CD8-positive, alpha-beta T cell (primary cell): ENCODE measurements at regions of chr7 and their contacts with region 1.

Region 1: DNA sequence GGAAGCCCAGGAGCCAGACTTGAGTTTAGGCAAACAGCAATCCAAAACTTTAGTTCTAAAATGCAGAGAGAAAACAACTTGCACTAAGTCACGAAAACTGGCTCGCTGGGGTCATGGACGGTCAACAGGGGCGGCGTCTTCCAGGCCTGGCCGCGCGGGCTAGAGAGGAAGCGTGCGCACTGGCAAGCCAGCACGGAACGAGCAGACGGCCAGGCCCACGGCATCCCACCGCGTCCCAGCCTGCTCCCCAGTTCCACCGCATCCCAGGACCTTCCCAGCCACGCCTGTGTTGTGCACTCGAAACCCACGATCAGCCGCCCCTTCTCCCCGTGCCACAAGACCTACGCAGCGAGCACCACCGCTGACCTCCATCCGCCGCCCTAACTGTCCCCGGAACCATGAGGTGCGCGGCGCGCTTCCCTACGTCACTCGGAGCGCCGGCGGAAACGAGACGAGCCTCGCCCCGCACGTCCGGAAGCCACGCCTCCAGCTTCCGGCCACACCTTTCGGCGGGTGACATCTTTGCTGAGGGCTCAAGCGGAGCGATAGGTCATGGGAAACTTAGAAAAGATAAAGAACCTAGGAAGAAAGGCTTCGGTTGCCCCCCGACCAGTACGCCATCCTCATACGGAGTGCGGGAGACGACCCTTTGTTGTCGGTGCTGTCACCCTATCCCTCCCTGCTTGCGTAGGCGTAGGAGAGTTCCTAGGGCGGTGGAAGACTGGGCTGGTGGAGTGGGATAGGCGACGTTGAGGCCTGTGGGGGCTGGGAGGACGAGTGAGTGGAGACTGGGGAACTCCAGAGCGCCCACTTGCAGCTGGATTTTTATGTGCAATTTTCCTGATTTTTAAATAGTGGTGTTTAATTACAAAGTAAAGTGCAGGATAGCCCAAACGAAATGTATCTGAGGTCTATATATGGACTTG is at the start of gene TBRG4:
- DNase-seq: peak; percentile 84 to 98 (median 94)
- ATAC-seq: peak; percentile 83
- H3K4me3 ChIP-seq: peak within 1 kb of the TSS; percentile 67 to 96
- H3K4me3 Mint-ChIP-seq: peak within 1 kb of the TSS; percentile 90
- H3K27ac ChIP-seq: peak within 1 kb of the TSS; percentile 94 to 99
- H3K27ac Mint-ChIP-seq: peak within 1 kb of the TSS; percentile 97
- H3K4me1 ChIP-seq: peaks cover 48% of the 10 kb centered on the region
- H3K4me1 Mint-ChIP-seq: peaks cover 48% of the 10 kb centered on the region
- H3K27me3 ChIP-seq: no peaks in the 10 kb centered on the region
- H3K27me3 Mint-ChIP-seq: no peaks in the 10 kb centered on the region
- CTCF ChIP-seq: no peak
- total RNA-seq, gene TBRG4: 75.3 to 79.7 TPM

Region 2: DNA sequence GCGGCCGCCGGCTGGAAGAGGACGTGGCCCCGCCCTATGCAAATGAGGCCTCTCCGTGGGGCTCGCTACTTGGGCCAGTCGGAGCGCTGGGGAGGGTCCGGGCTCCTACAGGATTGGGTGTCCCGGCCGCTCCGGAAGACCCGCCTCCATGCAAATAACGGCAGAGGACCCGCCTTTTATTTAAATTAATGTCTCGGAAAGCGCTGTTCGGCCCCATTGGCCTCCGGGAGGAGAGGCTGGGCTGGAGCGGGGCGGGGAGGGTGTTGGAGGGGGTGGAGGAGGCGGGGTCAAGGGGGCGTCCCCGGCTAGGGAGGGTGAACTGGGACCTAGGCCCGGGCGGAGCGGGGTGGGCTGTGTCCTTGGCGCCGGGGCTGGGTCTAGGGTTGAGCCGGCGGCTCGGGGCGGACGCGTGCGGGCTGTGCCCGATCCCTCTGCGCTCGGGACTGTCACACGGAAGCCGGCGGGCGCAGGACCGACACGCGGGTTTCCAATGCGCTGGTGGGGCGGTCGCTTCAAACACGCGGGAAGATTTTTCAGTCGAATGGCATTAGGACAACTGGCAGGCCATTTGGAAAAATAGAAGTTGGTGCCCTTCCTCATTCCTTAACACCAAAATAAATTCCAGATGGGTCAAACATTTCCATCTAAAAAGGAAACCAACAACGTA is 1028.9 kb before region 1 on chr7:
- CTCF ChIA-PET with region 1: no interaction called
- POLR2A ChIA-PET with region 1: no interaction called
- intact Hi-C with region 1: loop called (anchors 5 kb)
- DNase-seq: peak; percentile 94 to 100 (median 97)
- ATAC-seq: peak; percentile 93
- H3K4me3 ChIP-seq: peak overlapping the region; percentile 51 to 63
- H3K4me3 Mint-ChIP-seq: peak overlapping the region; percentile 88
- H3K27ac ChIP-seq: peak overlapping the region; percentile 54 to 78
- H3K27ac Mint-ChIP-seq: peak overlapping the region; percentile 82
- H3K4me1 ChIP-seq: peaks cover 26% of the 10 kb centered on the region
- H3K4me1 Mint-ChIP-seq: peaks cover 33% of the 10 kb centered on the region
- H3K27me3 ChIP-seq: no peaks in the 10 kb centered on the region
- H3K27me3 Mint-ChIP-seq: no peaks in the 10 kb centered on the region
- CTCF ChIP-seq: no peak

Region 3: GRCh38 chr7:44606450-44607254 is 504.9 kb before region 1 on chr7 and contains the start of gene OGDH:
- CTCF ChIA-PET with region 1: no interaction called
- POLR2A ChIA-PET with region 1: interaction called, 3 read pairs
- intact Hi-C with region 1: loop called in 1 of 2 experiments (anchors 1 kb)
- DNase-seq: peak; percentile 98 to 100 (median 99)
- ATAC-seq: peak; percentile 92
- H3K4me3 ChIP-seq: peak within 1 kb of the TSS; percentile 87 to 90
- H3K4me3 Mint-ChIP-seq: peak within 1 kb of the TSS; percentile 99
- H3K27ac ChIP-seq: peak within 1 kb of the TSS; percentile 96 to 98
- H3K27ac Mint-ChIP-seq: peak within 1 kb of the TSS; percentile 100
- H3K4me1 ChIP-seq: peaks cover 30% of the 10 kb centered on the region
- H3K4me1 Mint-ChIP-seq: peaks cover 34% of the 10 kb centered on the region
- H3K27me3 ChIP-seq: no peaks in the 10 kb centered on the region
- H3K27me3 Mint-ChIP-seq: no peaks in the 10 kb centered on the region
- CTCF ChIP-seq: no peak
- total RNA-seq, gene OGDH: 36.8 to 39.6 TPM

Region 4: DNA sequence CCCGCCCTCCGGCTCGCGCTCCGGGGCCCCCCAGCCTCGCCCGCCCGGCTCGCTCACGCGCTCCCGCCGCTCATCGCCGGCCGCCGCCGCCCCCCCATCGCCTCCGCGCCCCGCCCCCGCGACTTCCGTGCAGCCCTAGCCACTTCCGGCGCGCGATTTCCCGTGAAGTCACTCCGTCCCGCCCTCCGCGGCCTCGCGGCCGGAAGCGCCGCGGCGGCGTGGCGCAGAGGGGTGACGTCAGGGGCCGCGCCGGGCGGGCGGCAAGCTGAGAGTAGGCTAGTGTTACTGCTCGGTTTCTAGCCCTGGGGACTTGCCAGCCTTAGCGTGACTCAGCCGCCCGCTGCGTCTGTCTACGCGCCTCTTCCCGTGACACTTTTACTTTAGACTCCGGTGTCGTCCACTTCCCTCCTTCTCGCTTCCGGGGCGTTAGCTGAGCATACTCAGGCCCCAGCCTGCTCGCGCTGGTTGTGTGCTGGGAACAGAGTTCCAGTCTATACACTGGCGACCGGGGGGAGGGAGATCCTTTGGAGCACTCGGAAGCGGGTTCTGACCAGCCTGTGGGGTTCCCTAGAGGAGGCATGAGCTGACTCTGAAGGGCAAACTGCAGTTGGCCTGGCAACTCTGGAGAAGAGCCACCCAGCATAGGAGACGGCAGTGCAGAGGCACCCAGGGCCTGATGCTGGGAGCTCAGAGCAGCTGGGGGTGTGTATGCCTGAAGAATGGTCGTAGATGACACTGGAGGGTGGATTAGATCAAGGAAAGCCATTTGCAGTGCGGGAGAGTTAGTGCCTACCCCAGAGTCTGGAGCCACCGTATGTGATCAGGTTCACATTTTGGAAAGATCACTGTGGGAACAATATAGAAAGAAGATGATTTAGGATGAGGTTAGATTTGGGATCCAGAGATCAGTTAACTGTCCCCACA is 225.9 kb before region 1 on chr7 and contains the start of gene PURB:
- CTCF ChIA-PET with region 1: no interaction called
- POLR2A ChIA-PET with region 1: interaction called, 23 read pairs
- intact Hi-C with region 1: loop called in 1 of 2 experiments (anchors 5 kb)
- DNase-seq: peak; percentile 94 to 99 (median 97)
- ATAC-seq: peak; percentile 86
- H3K4me3 ChIP-seq: peak within 1 kb of the TSS; percentile 64 to 67
- H3K4me3 Mint-ChIP-seq: peak within 1 kb of the TSS; percentile 92
- H3K27ac ChIP-seq: peak within 1 kb of the TSS; percentile 98 to 100
- H3K27ac Mint-ChIP-seq: peak within 1 kb of the TSS; percentile 99
- H3K4me1 ChIP-seq: peaks cover 36% of the 10 kb centered on the region
- H3K4me1 Mint-ChIP-seq: peaks cover 45% of the 10 kb centered on the region
- H3K27me3 ChIP-seq: no peaks in the 10 kb centered on the region
- H3K27me3 Mint-ChIP-seq: no peaks in the 10 kb centered on the region
- CTCF ChIP-seq: no peak
- total RNA-seq, gene PURB: 16.3 to 16.5 TPM

Region 5: DNA sequence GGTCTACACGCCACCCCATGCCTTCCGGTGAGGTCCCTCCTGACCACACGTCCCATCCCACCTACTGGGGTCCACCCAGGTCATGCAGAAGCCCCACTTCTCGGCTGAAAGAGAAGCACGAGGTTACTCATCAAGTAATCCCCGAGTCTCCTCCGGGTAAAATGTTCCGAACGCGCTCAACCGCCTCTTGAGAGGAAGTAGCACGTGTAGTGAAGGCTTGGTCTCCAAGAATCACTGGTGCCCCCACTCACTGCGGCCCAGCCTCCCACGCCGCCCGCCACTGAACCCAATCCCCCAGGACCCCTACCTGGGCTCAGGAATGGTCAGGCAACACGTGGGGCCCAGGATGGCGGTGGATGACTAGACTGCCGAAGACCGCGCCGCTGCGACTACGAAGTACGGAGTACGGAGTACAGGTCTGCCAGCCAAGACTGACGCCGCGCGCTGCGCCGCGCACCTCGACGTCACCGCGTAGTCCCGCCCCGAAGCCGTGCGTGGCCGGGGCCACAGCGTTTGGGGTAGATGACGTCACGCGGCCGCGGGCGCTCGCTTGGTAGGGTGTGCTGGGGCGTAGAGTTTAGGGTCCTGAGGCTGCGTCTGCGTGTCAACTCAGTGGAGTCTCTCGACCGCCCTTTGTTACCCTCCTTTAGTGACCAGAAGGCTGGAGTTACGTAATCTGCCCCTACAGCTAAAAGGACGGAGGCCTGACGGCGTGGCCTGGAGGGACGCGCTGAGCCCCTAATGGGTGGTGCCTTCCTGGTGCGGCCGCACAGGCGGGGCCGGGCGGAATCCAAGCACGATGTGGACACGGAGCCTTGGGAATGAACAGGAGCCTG is 125.1 kb before region 1 on chr7:
- CTCF ChIA-PET with region 1: no interaction called
- POLR2A ChIA-PET with region 1: no interaction called
- intact Hi-C with region 1: loop called in 1 of 2 experiments (anchors 2 kb)
- DNase-seq: peak; percentile 86 to 98 (median 96)
- ATAC-seq: peak; percentile 93
- H3K4me3 ChIP-seq: peak overlapping the region; percentile 84 to 92
- H3K4me3 Mint-ChIP-seq: peak overlapping the region; percentile 96
- H3K27ac ChIP-seq: peak overlapping the region; percentile 93 to 99
- H3K27ac Mint-ChIP-seq: peak overlapping the region; percentile 98
- H3K4me1 ChIP-seq: peaks cover 37% of the 10 kb centered on the region
- H3K4me1 Mint-ChIP-seq: peaks cover 52% of the 10 kb centered on the region
- H3K27me3 ChIP-seq: no peaks in the 10 kb centered on the region
- H3K27me3 Mint-ChIP-seq: no peaks in the 10 kb centered on the region
- CTCF ChIP-seq: no peak

Region 6: GRCh38 chr7:45033261-45033930 is 78.2 kb before region 1 on chr7:
- CTCF ChIA-PET with region 1: no interaction called
- POLR2A ChIA-PET with region 1: interaction called, 10 read pairs
- intact Hi-C with region 1: no loop called
- DNase-seq: peak in 3 of 9 experiments; percentile 20 to 53 (median 34)
- ATAC-seq: peak; percentile 34
- H3K4me3 ChIP-seq: peak overlapping the region in 1 of 2 experiments; percentile 18
- H3K4me3 Mint-ChIP-seq: peak overlapping the region; percentile 75
- H3K27ac ChIP-seq: peak overlapping the region; percentile 11 to 51
- H3K27ac Mint-ChIP-seq: peak overlapping the region; percentile 91
- H3K4me1 ChIP-seq: peaks cover 77% of the 10 kb centered on the region
- H3K4me1 Mint-ChIP-seq: peaks cover 80% of the 10 kb centered on the region
- H3K27me3 ChIP-seq: no peaks in the 10 kb centered on the region
- H3K27me3 Mint-ChIP-seq: no peaks in the 10 kb centered on the region
- CTCF ChIP-seq: no peak

Region 7: DNA sequence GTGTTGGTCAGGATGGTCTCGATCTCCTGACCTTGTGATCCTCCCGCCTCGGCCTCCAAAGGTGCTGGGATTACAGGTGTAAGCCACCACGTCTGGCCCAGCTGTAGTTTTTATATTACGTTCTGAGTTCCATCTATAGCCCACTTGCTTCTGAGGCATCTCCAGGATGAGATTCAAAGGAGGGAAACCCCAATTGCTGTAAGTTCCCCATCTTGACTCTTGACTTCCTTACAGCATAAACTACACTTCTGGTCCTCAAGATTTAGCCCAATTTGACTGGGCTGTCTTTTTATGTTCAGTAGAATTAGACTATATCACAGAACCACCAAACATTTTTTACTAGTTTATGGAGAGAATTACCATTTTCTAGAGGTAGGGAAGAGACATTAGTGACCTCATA is 67.2 kb before region 1 on chr7:
- CTCF ChIA-PET with region 1: no interaction called
- POLR2A ChIA-PET with region 1: no interaction called
- intact Hi-C with region 1: no loop called
- DNase-seq: no peak
- ATAC-seq: no peak
- H3K4me3 ChIP-seq: no peak overlapping the region
- H3K4me3 Mint-ChIP-seq: no peak overlapping the region
- H3K27ac ChIP-seq: no peak overlapping the region
- H3K27ac Mint-ChIP-seq: peak overlapping the region; percentile 60
- H3K4me1 ChIP-seq: no peaks in the 10 kb centered on the region
- H3K4me1 Mint-ChIP-seq: peaks cover 49% of the 10 kb centered on the region
- H3K27me3 ChIP-seq: no peaks in the 10 kb centered on the region
- H3K27me3 Mint-ChIP-seq: no peaks in the 10 kb centered on the region
- CTCF ChIP-seq: no peak

Region 8: GRCh38 chr7:45484094-45484493 is 372.5 kb after region 1 on chr7:
- CTCF ChIA-PET with region 1: no interaction called
- POLR2A ChIA-PET with region 1: no interaction called
- intact Hi-C with region 1: no loop called
- DNase-seq: no peak
- ATAC-seq: no peak
- H3K4me3 ChIP-seq: no peak overlapping the region
- H3K4me3 Mint-ChIP-seq: no peak overlapping the region
- H3K27ac ChIP-seq: no peak overlapping the region
- H3K27ac Mint-ChIP-seq: no peak overlapping the region
- H3K4me1 ChIP-seq: no peaks in the 10 kb centered on the region
- H3K4me1 Mint-ChIP-seq: no peaks in the 10 kb centered on the region
- H3K27me3 ChIP-seq: no peaks in the 10 kb centered on the region
- H3K27me3 Mint-ChIP-seq: no peaks in the 10 kb centered on the region
- CTCF ChIP-seq: no peak

Region 9: GRCh38 chr7:45574521-45575500 is 463.2 kb after region 1 on chr7:
- CTCF ChIA-PET with region 1: no interaction called
- POLR2A ChIA-PET with region 1: no interaction called
- intact Hi-C with region 1: no loop called
- DNase-seq: no peak
- ATAC-seq: no peak
- H3K4me3 ChIP-seq: no peak overlapping the region
- H3K4me3 Mint-ChIP-seq: no peak overlapping the region
- H3K27ac ChIP-seq: no peak overlapping the region
- H3K27ac Mint-ChIP-seq: no peak overlapping the region
- H3K4me1 ChIP-seq: no peaks in the 10 kb centered on the region
- H3K4me1 Mint-ChIP-seq: peaks cover 2% of the 10 kb centered on the region
- H3K27me3 ChIP-seq: peaks cover 0 to 2% of the 10 kb centered on the region in 2 experiments
- H3K27me3 Mint-ChIP-seq: peaks cover 29% of the 10 kb centered on the region
- CTCF ChIP-seq: no peak